Activated naive CD4-positive, alpha-beta T cell treated with anti-CD3 and anti-CD28 coated beads for 36 hours (primary cell): ENCODE measurements at regions of chr5 and their contacts with region 1.

Region 1: DNA sequence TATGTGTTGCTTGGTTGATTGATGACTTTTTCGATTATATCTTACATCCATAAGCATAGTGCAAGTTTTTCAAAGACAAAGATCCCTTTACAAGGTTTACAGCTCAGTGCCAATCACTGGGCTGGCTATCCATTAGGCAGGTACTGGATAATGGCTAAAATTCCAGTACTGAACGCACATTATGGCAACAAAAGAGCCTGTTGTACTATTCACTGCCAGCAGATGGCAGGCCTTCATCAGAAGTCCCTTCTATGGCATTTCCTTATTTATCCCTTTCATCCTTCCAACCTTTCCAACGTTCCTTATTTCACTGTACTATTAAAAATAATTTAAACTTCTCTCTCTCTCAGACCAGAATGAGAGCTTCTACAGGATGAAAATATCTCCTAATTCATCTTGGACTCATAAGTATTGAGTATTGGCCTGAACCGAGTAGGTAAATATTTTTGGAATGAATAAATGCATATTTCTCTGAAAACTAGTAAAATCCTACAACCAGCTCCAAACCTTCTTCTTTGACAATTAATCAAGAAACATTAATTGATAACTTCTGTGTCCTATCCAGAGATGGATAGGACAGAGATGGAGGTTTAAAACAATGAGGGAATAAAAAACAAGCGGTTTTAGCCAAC is 6.7 kb upstream of the WNT8A start:
- DNase-seq: peak; percentile 77
- H3K4me3 Mint-ChIP-seq: no peak overlapping the region
- H3K27ac Mint-ChIP-seq: no peak overlapping the region
- H3K4me1 Mint-ChIP-seq: peaks cover 14% of the 10 kb centered on the region
- H3K27me3 Mint-ChIP-seq: no peaks in the 10 kb centered on the region

Region 2: DNA sequence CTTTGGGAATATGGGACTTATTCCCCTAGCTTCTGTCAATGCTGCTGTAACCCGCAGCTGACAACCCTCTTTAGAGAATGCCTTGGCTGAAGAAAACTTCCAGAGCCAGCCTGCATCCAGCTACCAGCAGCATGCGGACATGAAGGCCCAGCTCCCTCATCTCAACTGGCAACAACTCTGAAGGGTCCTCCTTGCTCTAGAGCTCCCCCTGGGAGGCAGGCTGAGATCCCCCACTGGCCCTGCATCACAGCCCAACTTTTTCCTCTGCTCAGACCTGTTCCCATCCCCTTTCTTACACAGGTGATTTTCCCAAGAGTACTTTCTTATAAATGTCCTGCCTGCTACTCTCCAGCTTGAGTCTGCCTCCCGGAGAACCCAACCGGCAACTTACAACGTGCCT is 12.1 kb before region 1 on chr5:
- CTCF ChIA-PET with region 1: interaction called, 73 read pairs
- intact Hi-C with region 1: no loop called
- DNase-seq: peak; percentile 14
- H3K4me3 Mint-ChIP-seq: no peak overlapping the region
- H3K27ac Mint-ChIP-seq: no peak overlapping the region
- H3K4me1 Mint-ChIP-seq: peaks cover 4% of the 10 kb centered on the region
- H3K27me3 Mint-ChIP-seq: no peaks in the 10 kb centered on the region

Region 3: DNA sequence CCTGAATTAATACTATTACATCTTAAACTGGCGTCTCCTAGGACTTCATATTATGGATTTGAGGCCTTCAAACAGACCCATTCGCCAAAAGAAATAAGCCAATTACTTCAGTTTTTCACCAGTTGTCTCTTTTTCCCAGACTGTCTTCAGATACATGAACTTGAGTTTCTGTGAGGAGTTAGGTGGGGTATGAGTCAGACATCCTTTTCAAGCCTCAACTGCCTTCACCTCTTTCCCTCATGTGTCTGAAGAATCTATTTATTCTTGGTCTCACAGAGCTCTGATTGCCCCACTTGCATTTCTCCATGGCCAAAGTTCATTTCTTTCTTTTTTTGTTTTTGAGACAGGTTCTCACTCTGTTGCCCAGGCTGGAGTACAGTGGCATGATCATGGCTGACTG is 19.2 kb after region 1 on chr5:
- CTCF ChIA-PET with region 1: interaction called, 25 read pairs
- intact Hi-C with region 1: loop called (anchors 2 kb)
- DNase-seq: no peak
- H3K4me3 Mint-ChIP-seq: no peak overlapping the region
- H3K27ac Mint-ChIP-seq: peak overlapping the region; percentile 25
- H3K4me1 Mint-ChIP-seq: peaks cover 49% of the 10 kb centered on the region
- H3K27me3 Mint-ChIP-seq: peaks cover 2% of the 10 kb centered on the region

Region 4: DNA sequence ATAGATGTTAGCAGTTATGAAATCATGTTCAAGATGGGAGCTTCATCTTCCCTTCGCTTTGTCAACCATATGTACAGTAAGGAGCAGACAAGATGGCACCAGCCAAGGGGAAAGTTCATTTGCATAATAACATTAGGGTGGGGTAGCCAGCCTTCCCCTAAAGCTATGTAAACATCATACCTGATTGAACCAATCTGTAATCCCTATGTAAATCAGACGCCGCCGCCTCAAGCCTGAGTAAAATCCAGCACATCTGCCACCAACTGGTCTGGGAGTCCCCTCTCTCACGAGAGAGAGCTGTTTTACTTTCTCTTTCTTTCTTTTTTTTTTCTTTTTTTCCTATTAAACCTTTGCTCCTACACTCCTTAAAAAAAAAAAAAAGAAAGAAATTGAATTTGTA is 330.8 kb after region 1 on chr5:
- CTCF ChIA-PET with region 1: no interaction called
- intact Hi-C with region 1: loop called (anchors 5 kb)
- DNase-seq: peak; percentile 73
- H3K4me3 Mint-ChIP-seq: no peak overlapping the region
- H3K27ac Mint-ChIP-seq: peak overlapping the region; percentile 74
- H3K4me1 Mint-ChIP-seq: peaks cover 11% of the 10 kb centered on the region
- H3K27me3 Mint-ChIP-seq: no peaks in the 10 kb centered on the region

Region 5: GRCh38 chr5:138503487-138504270 is 426.5 kb after region 1 on chr5:
- CTCF ChIA-PET with region 1: no interaction called
- intact Hi-C with region 1: loop called (anchors 1 kb)
- DNase-seq: peak; percentile 53
- H3K4me3 Mint-ChIP-seq: no peak overlapping the region
- H3K27ac Mint-ChIP-seq: no peak overlapping the region
- H3K4me1 Mint-ChIP-seq: no peaks in the 10 kb centered on the region
- H3K27me3 Mint-ChIP-seq: no peaks in the 10 kb centered on the region